Prostate gland (tissue), 2 donors: ENCODE measurements at regions of chr11 and their contacts with region 1.

Region 1: GRCh38 chr11:82718307-82718706 is 15.4 kb downstream of the FAM181B start:
- DNase-seq: no peak
- H3K4me3 ChIP-seq: no peak overlapping the region
- H3K27ac ChIP-seq: no peak overlapping the region
- H3K4me1 ChIP-seq: no peaks in the 10 kb centered on the region
- H3K27me3 ChIP-seq: no peaks in the 10 kb centered on the region
- CTCF ChIP-seq: peak; percentile 42 to 76 (median 56)
- POLR2A ChIP-seq: no peak

Region 2: GRCh38 chr11:82663535-82663934 is 54.8 kb before region 1 on chr11:
- intact Hi-C with region 1: no loop called
- DNase-seq: no peak
- H3K4me3 ChIP-seq: no peak overlapping the region
- H3K27ac ChIP-seq: no peak overlapping the region
- H3K4me1 ChIP-seq: no peaks in the 10 kb centered on the region
- H3K27me3 ChIP-seq: no peaks in the 10 kb centered on the region
- CTCF ChIP-seq: no peak
- POLR2A ChIP-seq: no peak

Region 3: DNA sequence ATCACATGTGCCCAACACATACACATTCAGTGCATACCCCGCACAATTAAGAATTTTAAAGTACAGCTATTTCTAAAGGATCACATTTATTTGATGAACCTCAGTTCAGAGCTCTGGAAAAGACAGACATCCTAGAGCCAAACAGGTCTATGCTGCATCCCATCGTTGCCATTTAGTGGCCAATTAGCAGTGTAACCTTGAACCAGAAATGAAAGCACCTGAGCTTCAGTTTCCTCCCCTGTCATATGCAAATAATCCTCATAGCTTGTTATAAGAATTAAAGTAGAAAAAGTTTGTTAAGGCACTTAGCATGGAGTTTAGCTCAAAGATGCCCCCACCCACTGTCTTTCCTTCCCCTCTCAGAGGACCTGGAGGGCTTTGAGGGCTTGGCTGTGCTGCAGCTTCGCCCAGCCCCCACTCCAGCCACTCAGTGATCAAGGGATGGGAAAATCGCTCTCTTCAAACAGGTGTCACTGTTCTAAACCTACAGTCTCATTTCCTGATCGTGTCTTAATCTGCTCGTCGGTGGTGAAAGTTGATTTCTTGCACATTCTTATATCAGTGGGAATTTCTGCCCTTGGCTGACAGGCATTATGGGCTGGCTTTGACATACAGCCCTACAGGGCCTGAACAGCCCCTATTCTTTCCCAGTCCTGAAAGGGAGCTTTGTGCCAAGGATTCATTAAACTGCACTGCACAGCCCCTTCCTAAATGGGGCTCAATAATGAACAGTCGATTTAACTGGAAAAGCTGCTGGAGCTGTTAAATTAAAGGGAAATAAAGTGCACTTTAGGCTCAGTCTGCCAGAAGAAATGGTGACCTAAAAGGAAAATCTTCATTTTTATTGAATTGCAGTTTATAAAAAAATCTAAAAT is 38.7 kb after region 1 on chr11:
- intact Hi-C with region 1: no loop called
- DNase-seq: no peak
- H3K4me3 ChIP-seq: no peak overlapping the region
- H3K27ac ChIP-seq: no peak overlapping the region
- H3K4me1 ChIP-seq: no peaks in the 10 kb centered on the region
- H3K27me3 ChIP-seq: no peaks in the 10 kb centered on the region
- CTCF ChIP-seq: no peak
- POLR2A ChIP-seq: no peak

Region 4: GRCh38 chr11:82867495-82868082 is 149.3 kb after region 1 on chr11:
- intact Hi-C with region 1: loop called (anchors 5 kb)
- DNase-seq: peak; percentile 84
- H3K4me3 ChIP-seq: no peak overlapping the region
- H3K27ac ChIP-seq: no peak overlapping the region
- H3K4me1 ChIP-seq: no peaks in the 10 kb centered on the region
- H3K27me3 ChIP-seq: no peaks in the 10 kb centered on the region
- CTCF ChIP-seq: peak; percentile 49 to 77 (median 66)
- POLR2A ChIP-seq: no peak

Region 5: GRCh38 chr11:83241291-83241946 is 523.1 kb after region 1 on chr11:
- intact Hi-C with region 1: loop called (anchors 10 kb)
- DNase-seq: peak; percentile 52
- H3K4me3 ChIP-seq: no peak overlapping the region
- H3K27ac ChIP-seq: no peak overlapping the region
- H3K4me1 ChIP-seq: no peaks in the 10 kb centered on the region
- H3K27me3 ChIP-seq: no peaks in the 10 kb centered on the region
- CTCF ChIP-seq: peak in 3 of 4 experiments; percentile 46 to 53 (median 47)
- POLR2A ChIP-seq: no peak

Region 6: GRCh38 chr11:83819933-83820549 is 1101.7 kb after region 1 on chr11:
- intact Hi-C with region 1: loop called (anchors 10 kb)
- DNase-seq: peak; percentile 57
- H3K4me3 ChIP-seq: no peak overlapping the region
- H3K27ac ChIP-seq: no peak overlapping the region
- H3K4me1 ChIP-seq: no peaks in the 10 kb centered on the region
- H3K27me3 ChIP-seq: no peaks in the 10 kb centered on the region
- CTCF ChIP-seq: peak in 3 of 4 experiments; percentile 46 to 83 (median 82)
- POLR2A ChIP-seq: no peak